Activated CD4-positive, alpha-beta T cell treated with anti-CD3 and anti-CD28 coated beads for 36 hours (primary cell): ENCODE measurements at regions of chrX and their contacts with region 1.

Region 1: GRCh38 chrX:1657367-1658070 is 42.7 kb downstream of the ASMT start:
- DNase-seq: peak; percentile 80
- ATAC-seq: peak; percentile 67
- H3K4me3 Mint-ChIP-seq: peak overlapping the region; percentile 93
- H3K27ac Mint-ChIP-seq: peak overlapping the region; percentile 98
- H3K4me1 Mint-ChIP-seq: peaks cover 23% of the 10 kb centered on the region
- H3K27me3 Mint-ChIP-seq: no peaks in the 10 kb centered on the region

Region 2: DNA sequence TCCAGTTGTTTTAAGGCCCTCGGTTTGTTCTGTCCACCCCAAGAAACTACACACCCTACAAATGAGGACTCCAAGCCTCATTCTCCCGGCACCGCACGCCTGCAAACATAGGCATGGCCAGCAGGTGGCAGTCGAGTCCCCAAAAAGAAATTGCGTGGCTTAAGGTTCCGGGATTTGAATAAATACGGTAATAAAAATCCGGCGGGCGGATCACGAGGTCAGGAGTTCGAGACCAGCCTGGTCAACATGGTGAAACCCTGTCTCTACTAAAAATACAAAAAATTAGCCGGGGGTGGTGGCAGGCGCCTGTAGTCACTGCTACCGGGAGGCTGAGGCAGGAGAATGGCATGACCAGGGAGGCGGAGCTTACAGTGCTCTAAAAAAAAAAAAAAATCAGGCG is 410.7 kb before region 1 on chrX:
- CTCF ChIA-PET with region 1: no interaction called
- POLR2A ChIA-PET with region 1: no interaction called
- intact Hi-C with region 1: loop called in 1 of 2 experiments (anchors 10 kb)
- DNase-seq: peak; percentile 91
- ATAC-seq: peak; percentile 33
- H3K4me3 Mint-ChIP-seq: no peak overlapping the region
- H3K27ac Mint-ChIP-seq: no peak overlapping the region
- H3K4me1 Mint-ChIP-seq: peaks cover 36% of the 10 kb centered on the region
- H3K27me3 Mint-ChIP-seq: no peaks in the 10 kb centered on the region

Region 3: GRCh38 chrX:2500267-2501075 is 843.0 kb after region 1 on chrX and contains the starts of genes DHRSX and ZBED1:
- CTCF ChIA-PET with region 1: no interaction called
- POLR2A ChIA-PET with region 1: no interaction called
- intact Hi-C with region 1: loop called in 1 of 2 experiments (anchors 2 kb)
- DNase-seq: peak; percentile 72
- ATAC-seq: peak; percentile 78
- H3K4me3 Mint-ChIP-seq: peak within 1 kb of the TSS; percentile 74
- H3K27ac Mint-ChIP-seq: peak within 1 kb of the TSS; percentile 81
- H3K4me1 Mint-ChIP-seq: peaks cover 26% of the 10 kb centered on the region
- H3K27me3 Mint-ChIP-seq: no peaks in the 10 kb centered on the region
- total RNA-seq, gene DHRSX: 13.8 to 17.7 TPM
- total RNA-seq, gene ZBED1: 30.0 to 33.6 TPM

Region 4: DNA sequence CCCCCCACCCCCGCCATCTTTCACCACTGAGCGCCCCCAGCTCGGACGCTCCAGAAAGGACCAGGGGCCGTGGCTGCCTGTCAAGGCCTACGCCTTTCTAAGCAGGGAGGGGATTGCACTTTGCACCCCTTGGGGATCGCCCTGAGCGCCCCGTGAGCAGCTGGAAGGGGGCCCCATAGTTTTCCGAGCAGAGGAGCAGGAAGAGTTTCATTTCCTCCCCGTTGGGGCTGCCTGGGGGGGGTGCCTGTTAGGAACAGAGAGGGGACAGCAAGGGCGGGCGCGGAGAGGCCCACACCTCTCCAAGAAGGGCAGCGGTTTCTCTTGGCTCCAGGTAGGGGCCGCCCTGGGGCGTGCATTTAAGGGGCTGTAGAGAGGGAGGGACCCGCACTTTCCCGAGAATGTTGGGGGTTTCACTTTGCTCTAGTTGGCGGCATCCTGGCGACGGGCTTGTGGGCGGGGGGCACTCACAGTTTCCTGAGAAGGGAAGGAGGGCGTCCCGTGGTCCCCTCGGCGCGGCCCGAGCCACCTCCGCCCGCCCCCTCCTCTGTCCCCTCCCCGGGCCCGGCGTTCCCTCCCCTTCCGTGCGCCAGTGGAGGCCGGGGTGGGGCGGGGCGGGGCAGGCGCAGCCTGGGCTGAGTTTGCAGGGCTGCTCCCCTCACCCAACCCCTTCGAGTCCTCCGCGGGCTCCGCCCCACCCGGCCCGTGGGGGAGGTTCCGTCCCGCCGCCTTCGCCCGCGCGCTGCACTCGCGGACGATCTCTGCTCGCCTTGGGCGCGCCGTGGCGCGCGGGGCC is 951.3 kb after region 1 on chrX:
- CTCF ChIA-PET with region 1: no interaction called
- POLR2A ChIA-PET with region 1: no interaction called
- intact Hi-C with region 1: loop called (anchors 1 to 5 kb)
- DNase-seq: peak; percentile 93
- ATAC-seq: peak; percentile 94
- H3K4me3 Mint-ChIP-seq: peak overlapping the region; percentile 83
- H3K27ac Mint-ChIP-seq: peak overlapping the region; percentile 82
- H3K4me1 Mint-ChIP-seq: peaks cover 47% of the 10 kb centered on the region
- H3K27me3 Mint-ChIP-seq: no peaks in the 10 kb centered on the region

Region 5: GRCh38 chrX:2819345-2820135 is 1162.0 kb after region 1 on chrX:
- CTCF ChIA-PET with region 1: no interaction called
- POLR2A ChIA-PET with region 1: no interaction called
- intact Hi-C with region 1: loop called in 1 of 2 experiments (anchors 10 kb)
- DNase-seq: peak; percentile 15
- ATAC-seq: no peak
- H3K4me3 Mint-ChIP-seq: no peak overlapping the region
- H3K27ac Mint-ChIP-seq: no peak overlapping the region
- H3K4me1 Mint-ChIP-seq: peaks cover 5% of the 10 kb centered on the region
- H3K27me3 Mint-ChIP-seq: peaks cover 3% of the 10 kb centered on the region